Common myeloid progenitor, CD34-positive (primary cell): ENCODE measurements at regions of chr20 and their contacts with region 1.

Region 1: DNA sequence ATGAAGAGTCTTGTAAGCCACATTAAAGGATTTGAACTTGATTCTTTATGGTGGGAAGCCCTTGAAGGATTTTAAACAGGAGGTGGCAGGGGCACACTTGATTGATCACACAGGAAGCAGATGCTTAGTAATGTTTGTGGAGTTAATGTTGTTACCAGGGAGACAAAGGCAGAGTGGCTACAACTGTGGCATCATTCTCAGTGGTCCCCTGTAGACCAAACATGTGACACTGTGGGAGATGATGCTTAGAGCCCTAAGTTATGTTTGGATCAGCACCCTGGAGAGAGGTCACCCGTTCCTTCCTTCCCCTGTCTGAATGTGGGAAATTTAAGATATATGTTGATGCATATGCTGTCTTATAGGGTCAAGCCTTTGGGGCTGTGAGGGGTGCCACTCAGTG is 53.2 kb downstream of the EIF2S2 start:
- DNase-seq: peak; percentile 56 to 92 (median 85)
- H3K4me3 ChIP-seq: no peak overlapping the region
- H3K27ac ChIP-seq: no peak overlapping the region
- H3K4me1 ChIP-seq: peaks cover 3 to 30% (median 16%) of the 10 kb centered on the region in 4 experiments
- H3K27me3 ChIP-seq: no peaks in the 10 kb centered on the region

Region 2: GRCh38 chr20:34010405-34010931 is 48.4 kb before region 1 on chr20:
- CTCF ChIA-PET with region 1: no interaction called
- POLR2A ChIA-PET with region 1: interaction called, 10 read pairs
- DNase-seq: peak in 2 of 3 donors; percentile 32 to 50
- H3K4me3 ChIP-seq: peak overlapping the region in 1 of 7 experiments; percentile 60
- H3K27ac ChIP-seq: peak overlapping the region in 1 of 2 experiments; percentile 67
- H3K4me1 ChIP-seq: peaks cover 19 to 34% (median 28%) of the 10 kb centered on the region in 4 experiments
- H3K27me3 ChIP-seq: no peaks in the 10 kb centered on the region

Region 3: GRCh38 chr20:34654207-34654744 is 595.4 kb after region 1 on chr20:
- CTCF ChIA-PET with region 1: no interaction called
- POLR2A ChIA-PET with region 1: no interaction called
- DNase-seq: no peak
- H3K4me3 ChIP-seq: no peak overlapping the region
- H3K27ac ChIP-seq: no peak overlapping the region
- H3K4me1 ChIP-seq: no peaks in the 10 kb centered on the region
- H3K27me3 ChIP-seq: no peaks in the 10 kb centered on the region